Posterior vena cava (tissue), 2 donors: ENCODE measurements at regions of chr16 and their contacts with region 1.

Region 1: DNA sequence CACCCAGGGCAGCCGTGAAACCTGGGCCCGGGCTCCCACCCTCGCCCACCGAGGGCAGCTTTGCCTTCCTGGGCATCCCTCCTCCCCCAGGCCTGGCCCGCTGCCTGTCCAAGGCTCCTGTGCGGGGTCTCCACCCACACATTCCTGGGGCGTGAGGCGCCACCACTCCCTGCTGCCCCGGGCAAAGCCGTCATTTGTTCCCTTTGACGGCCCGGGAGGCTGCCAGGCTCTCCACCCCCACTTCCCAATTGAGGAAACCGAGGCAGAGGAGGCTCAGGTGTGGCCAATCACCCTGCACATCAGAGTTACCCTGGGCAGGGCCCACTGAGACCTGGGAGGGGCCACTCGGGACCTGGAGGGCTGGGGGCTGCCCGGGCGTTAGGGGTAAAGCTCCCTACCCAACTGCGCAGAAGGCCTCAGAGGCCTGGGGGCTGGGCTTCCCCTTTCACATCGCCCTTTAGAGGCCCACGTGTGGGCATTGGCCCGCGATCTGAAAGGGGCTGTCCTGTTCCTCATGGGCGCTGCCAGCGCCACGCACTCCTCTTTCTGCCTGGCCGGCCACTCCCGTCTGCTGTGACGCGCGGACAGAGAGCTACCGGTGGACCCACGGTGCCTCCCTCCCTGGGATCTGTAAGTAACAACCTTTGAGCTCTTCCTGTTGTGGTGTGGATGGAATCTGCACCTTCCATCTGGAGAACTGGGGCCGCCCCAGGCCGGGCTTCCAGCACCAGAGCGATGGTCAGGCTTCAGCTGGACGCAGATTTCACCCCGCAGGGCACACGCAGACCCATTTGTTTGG is at the start of gene MSLN:
- DNase-seq: no peak
- total RNA-seq, gene MSLN: 0.29 to 0.37 TPM

Region 2: GRCh38 chr16:546909-547770 is 213.6 kb before region 1 on chr16:
- intact Hi-C with region 1: no loop called
- DNase-seq: peak; percentile 92

Region 3: DNA sequence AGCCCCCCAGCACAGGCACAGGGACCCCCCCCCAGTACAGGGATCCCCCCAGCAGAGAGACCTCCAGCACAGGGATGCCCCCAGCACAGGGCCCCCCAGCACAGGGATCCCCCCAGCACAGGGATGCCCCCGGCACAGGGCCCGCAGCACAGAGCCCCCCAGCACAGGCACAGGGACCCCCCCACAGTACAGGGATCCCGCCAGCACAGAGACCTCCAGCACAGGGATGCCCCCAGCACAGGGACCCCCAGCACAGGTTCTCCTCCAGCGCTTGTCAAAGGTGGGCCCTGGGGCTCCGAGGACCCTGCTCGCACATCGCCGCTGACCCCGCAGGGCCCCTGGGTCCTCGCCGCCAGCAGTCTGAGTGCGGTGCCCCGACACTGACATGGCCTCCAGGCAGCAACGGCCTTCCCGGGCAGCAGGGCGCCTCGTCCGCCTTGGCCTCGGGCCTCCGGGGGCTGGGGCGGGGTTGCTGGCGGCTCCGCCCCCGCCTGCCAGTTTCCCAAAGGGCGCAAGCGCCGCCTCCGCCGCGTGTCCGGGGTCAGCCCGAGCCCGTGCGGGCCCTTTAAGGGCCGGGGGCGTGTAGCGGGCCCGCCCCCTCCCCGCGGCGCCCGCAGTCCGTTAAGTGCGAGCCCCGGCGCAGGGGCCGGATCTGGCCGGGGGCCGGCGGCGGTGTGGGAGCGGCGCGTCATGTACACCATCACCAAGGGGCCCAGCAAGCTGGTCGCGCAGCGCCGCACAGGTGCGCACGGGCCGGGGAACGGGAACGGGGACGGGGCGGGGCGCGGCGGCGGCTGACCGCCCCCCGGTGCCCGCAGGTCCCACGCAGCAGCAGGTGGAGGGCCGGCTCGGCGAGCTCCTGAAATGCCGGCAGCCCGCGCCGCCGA is 119.2 kb before region 1 on chr16 and contains the start of gene MCRIP2:
- intact Hi-C with region 1: no loop called
- DNase-seq: peak; percentile 94
- total RNA-seq, gene MCRIP2: 19.0 to 21.5 TPM

Region 4: DNA sequence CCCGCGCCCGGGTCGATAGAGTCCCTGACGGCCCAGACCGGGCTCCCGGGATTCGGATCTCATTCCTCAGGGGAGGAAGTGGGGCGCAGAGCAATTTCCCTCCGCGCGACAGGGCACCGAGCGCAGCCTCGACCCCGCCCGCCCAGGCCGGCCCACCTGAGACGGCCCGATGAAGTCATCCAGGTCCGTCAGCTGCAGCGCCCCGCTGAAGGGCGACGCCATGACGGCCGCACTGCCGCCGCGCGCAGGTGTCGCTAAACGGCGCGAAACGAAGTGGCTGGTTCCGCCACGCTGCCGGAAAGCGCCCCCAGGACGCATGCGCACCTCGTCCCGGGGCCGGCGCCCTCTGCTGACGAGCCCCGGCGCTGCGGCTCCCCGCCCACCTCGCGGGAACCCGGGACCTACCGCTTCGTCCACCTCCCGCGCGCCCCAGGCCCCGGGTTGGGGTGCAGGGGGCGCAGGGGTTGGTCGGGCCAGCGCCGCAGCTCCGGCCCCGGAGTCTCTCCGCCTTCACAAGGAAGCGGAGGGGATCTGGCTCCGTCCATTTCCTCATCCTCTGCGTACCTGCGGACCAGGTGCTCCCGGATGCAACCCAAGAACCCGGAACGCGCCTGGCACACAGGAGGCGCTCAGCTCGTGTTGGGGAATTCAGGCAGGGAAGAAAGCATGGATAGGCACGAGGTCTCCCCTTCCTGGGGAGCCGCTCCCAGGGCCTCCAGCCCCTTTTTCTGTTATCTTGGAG is 19.8 kb before region 1 on chr16 and contains the start of gene CIAO3:
- intact Hi-C with region 1: no loop called
- DNase-seq: peak; percentile 97
- total RNA-seq, gene CIAO3: 18.2 to 18.6 TPM

Region 5: DNA sequence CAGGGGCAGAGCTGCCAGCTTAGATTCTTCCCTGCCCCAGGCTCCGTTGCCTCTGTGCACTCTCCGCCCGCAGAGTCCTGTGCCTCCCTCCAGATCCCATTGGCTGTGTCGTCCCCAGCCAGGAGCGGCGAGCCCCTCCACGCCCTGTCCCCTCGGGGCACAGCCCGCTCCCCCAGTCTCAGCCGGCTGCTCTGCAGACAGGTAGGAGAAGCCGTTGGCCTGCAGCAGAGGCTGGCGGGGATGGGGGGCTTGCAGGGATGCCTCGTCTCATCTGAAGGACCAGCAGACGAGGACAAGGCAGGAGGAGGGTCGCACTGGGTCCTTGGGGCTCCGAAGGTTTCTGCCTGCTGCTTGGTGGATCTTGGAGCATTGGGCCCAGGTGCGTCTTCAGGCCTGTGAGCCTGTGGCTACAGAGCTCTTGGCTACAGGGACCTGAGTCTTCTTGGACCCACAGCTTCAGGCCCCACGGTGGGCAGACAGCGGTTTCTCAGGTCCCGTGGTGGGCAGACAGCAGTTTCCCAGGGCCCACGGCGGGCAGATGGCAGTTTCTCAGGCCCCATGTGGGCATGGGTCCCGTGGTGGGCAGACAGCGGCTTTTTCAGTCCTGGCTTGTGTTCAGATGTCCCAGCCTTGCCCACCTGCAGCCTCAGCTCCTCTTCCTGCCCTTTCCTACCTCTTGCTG is 458.3 kb after region 1 on chr16:
- intact Hi-C with region 1: loop called in 1 of 2 experiments (anchors 1 kb)
- DNase-seq: no peak

Region 6: DNA sequence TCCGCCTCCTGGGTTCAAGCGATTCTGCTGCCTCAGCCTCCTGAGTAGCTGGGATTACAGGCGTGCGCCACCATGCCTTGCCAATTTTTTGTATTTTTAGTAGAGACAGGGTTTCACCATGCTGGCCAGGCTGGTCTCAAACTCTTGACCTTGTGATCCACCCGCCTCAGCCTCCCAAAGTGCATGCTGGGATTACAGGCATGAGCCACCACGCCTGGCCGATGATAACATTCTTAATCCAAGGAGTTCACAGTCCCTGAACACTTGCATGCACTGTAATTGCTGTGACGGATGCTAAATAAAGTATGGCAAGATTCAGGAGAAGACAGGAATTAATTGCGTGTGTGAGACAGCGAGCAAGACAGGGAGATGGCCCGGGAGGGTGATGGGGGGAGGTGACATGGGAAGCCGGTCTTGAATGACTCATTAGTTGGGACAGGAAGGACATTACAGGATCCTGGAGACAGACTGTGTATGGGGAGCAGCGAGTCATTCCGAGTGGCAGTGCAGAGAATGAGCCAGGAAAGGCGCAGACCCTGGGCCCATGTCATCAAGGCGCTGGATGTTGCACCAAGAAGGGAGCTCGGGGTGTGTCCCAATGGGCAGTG is 1573.1 kb after region 1 on chr16:
- intact Hi-C with region 1: loop called in 1 of 2 experiments (anchors 5 kb)
- DNase-seq: no peak